ENCODE measurements at regions of chr19 and their contacts with region 1.

Region 1: GRCh38 chr19:47608074-47608918 is 638 bp upstream of the BICRA start:
- DNase-seq: peak; percentile 93 to 95
- H3K4me3 ChIP-seq: peak overlapping the region; percentile 86 to 98 (median 96)
- H3K27ac ChIP-seq: peak overlapping the region; percentile 87 to 96
- H3K4me1 ChIP-seq: peaks cover 0 to 10% of the 10 kb centered on the region in 2 donors
- H3K27me3 ChIP-seq: no peaks in the 10 kb centered on the region
- CTCF ChIP-seq: peak; percentile 27 to 48 (median 44)
- POLR2A ChIP-seq: peak; percentile 56

Region 2: DNA sequence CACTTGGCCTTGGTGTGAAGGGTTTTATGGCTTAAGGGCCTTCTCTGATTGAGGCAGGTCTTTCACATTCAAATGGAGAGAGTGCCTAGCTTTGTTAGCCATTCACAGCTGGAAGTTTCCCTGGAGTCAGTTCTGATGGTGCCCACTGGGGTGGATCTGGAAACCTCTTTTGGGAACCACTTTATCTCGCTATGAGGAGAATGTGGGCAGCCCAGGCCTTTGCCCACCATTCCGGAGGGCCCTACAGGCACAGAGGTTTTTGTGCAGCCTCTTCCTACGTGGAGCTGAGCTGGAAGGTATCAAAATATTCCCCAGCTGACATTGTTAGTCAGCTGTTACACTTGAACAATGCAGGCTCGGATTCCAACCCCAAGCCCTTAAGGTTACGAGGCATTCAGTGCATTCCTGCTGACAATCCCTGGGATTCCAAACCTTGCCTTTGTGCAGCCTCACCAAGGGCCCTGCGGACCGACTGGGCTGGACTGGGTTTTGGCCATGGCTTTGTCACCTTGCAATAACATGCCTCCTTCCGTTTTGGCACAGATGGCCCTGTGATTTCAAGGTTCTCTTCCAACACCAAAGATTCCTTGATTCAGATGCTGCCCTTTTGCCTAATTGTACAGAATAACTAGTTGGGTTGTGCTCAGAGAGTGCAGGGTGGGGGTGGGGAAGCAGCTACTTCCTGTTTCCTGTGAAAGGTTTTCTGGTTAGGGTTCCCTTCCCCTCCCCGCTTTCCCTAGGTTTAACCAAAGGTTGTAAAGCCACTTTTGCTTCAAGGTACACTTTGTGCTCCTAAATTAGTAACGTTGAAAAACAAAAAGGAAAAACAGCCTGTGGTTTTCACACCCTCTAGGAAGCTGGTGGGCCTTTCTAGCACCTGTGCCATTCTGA is 450.6 kb before region 1 on chr19:
- intact Hi-C with region 1: no loop called
- DNase-seq: peak in 1 of 2 donors; percentile 58
- H3K4me3 ChIP-seq: peak overlapping the region in 2 of 3 donors; percentile 7 to 47
- H3K27ac ChIP-seq: peak overlapping the region; percentile 89 to 93
- H3K4me1 ChIP-seq: peaks cover 11 to 21% of the 10 kb centered on the region in 2 donors
- H3K27me3 ChIP-seq: no peaks in the 10 kb centered on the region
- CTCF ChIP-seq: peak in 2 of 3 donors; percentile 14 to 28
- POLR2A ChIP-seq: no peak

Region 3: DNA sequence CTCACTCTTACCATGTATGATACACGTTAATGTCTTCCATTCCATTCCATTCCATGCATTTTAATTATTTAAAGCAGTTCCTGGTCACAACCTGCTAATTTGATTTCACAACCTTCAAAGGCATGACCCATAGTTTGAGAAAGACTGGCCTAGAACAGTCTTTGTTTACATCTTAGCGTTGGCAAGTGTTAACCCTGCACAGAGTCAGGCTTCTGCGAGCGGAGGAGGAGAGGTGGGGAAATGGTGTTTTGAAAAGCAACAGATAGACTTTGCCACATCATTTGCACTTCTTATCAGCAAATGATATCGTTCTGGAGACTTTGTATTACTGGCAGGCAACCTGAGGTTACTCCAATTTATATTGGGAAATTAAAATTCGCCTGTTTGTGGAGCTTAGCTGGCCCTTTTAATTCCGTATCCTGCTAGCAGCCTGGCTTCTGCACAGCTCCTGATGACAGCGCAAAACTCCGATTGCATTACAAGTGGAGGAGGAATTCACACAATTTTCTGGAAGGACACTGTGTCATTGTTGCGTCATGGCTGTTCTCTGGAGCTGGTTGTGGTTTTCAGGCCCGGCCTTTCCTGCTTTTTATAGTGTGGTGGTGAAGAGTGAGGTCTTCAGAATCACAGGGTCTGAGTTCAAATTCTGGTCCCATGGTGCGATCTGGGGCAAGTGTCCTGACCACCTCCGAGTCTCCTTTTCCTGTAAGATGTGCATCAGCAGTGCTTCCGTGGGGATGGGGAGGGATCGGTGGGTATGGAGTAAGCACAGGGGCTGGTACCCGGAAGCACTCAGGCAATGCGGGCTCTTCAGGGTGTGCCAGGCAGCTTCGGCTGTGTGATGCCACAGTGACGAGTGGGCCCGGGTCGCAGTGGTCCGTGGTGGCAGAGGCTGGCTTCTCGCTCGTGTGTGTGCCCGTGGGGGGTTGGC is 55.8 kb after region 1 on chr19:
- intact Hi-C with region 1: loop called (anchors 2 kb)
- DNase-seq: peak; percentile 66 to 85
- H3K4me3 ChIP-seq: peak overlapping the region in 1 of 3 donors; percentile 47
- H3K27ac ChIP-seq: peak overlapping the region; percentile 91 to 99
- H3K4me1 ChIP-seq: peaks cover 15 to 19% of the 10 kb centered on the region in 2 donors
- H3K27me3 ChIP-seq: no peaks in the 10 kb centered on the region
- CTCF ChIP-seq: no peak
- POLR2A ChIP-seq: no peak

Region 4: GRCh38 chr19:47704024-47704423 is 95.7 kb after region 1 on chr19:
- intact Hi-C with region 1: loop called (anchors 5 kb)
- DNase-seq: no peak
- H3K4me3 ChIP-seq: no peak overlapping the region
- H3K27ac ChIP-seq: no peak overlapping the region
- H3K4me1 ChIP-seq: no peaks in the 10 kb centered on the region
- H3K27me3 ChIP-seq: no peaks in the 10 kb centered on the region
- CTCF ChIP-seq: no peak
- POLR2A ChIP-seq: no peak

Region 5: GRCh38 chr19:48152551-48152950 is 544.3 kb after region 1 on chr19:
- intact Hi-C with region 1: no loop called
- DNase-seq: peak; percentile 49 to 61
- H3K4me3 ChIP-seq: no peak overlapping the region
- H3K27ac ChIP-seq: no peak overlapping the region
- H3K4me1 ChIP-seq: no peaks in the 10 kb centered on the region
- H3K27me3 ChIP-seq: no peaks in the 10 kb centered on the region
- CTCF ChIP-seq: peak; percentile 77 to 86 (median 78)
- POLR2A ChIP-seq: no peak

Region 6: GRCh38 chr19:48835734-48836088 is 1227.4 kb after region 1 on chr19:
- intact Hi-C with region 1: no loop called
- DNase-seq: peak; percentile 95
- H3K4me3 ChIP-seq: peak overlapping the region; percentile 41 to 69 (median 52)
- H3K27ac ChIP-seq: peak overlapping the region; percentile 88 to 91
- H3K4me1 ChIP-seq: no peaks in the 10 kb centered on the region
- H3K27me3 ChIP-seq: no peaks in the 10 kb centered on the region
- CTCF ChIP-seq: peak; percentile 90 to 98 (median 97)
- POLR2A ChIP-seq: no peak